ENCODE measurements at regions of chr1 and their contacts with region 1.

Region 1: DNA sequence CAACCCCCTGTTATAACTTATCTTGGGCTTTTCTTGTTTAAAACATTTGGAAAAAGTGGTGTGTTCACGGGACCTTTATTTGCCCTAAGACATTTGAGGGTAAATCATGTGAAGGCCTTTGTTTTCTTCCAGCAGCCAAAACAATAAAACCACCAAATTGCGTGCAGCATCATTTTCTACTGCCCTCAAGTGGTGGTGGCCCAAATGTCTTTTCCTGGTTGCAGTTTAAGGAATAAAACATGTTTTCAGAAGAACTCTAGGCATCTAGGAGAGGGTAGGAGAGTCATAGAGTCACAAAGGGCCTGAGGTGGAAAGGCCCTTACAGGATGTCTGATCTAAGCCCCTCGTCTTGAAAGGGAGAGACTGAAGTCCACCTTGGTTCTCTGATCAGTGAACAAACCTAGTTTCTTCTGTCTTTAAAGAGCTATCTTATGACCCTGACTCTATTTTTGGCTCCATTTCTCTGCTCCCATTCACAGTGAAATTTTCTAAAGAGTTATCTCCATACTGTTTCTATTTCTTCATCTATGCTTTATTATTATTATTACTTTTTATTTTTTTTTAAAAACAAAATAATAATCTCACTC is 16.0 kb upstream of the EPS15 start:
- DNase-seq: no peak
- H3K4me3 ChIP-seq: no peak overlapping the region
- CTCF ChIP-seq: peak; percentile 70

Region 2: DNA sequence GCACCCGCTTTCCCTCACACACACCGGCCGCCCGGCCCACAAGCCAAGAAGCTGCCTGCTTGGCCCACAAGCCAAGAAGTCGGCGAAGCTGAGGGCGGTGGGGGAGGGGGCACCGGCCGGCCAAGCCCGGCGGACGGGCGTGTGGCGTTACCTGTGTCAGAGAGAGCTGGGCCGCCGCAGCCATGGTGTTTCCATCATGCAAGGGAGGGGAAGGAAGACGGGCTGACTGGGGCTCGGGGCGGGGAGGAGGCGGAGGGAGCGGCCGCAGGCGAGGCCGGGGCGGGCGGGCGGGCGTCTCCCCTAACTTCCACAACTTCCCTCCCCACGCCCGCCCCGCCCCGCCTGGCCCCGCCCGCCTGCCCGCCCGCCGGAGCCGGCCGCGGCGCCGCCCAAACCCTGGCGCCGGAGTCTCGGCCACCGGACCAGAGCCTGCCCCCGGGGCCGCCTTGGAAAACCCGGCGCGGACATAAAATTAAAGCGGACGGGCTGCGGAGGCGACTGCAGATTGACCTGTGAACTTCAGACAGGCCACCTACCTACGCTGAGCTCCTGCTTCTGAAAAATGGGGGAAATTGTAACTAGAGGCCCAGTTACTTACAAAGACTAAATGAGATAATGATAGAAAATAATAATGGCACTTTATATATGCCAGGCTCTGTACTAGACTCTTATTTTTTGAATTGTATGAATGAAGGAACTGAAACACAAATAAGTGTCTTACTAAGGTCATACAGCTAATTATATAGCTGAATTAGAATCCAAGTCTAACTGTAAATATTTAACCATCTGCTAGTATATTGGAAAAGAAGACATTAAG is 15.8 kb before region 1 on chr1 and contains the start of gene EPS15:
- CTCF ChIA-PET with region 1: interaction called, 68 read pairs
- POLR2A ChIA-PET with region 1: no interaction called
- DNase-seq: no peak
- H3K4me3 ChIP-seq: peak within 1 kb of the TSS; percentile 79
- CTCF ChIP-seq: no peak

Region 3: DNA sequence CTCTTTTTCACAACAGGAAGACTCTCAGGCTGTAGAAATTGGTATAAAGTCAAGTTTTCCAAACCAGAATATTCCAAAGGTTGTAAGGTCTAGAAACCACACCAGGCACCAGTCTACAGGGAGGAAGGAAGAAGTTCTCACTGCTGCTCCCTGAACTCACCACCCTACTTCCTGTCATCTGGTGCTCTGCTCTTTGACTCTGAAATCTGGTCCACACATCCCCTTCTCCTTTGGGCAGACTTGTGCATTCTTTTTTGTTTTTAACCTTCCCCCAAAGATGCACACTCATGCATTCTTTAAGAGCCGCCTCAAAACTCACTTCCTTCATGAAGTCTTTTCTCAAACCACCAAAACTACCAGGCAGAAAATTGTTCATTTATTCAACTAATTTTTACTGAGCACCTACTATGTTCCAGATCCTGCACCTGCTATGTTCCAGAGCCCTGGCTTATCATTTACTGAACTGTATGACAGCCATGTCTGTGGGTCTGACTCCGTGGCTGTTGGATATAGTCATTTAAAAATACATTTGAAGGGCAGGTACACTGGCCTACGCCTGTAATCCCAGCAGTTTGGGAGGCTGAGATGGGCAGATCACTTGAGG is 14.0 kb after region 1 on chr1:
- CTCF ChIA-PET with region 1: interaction called, 33 read pairs
- POLR2A ChIA-PET with region 1: no interaction called
- DNase-seq: no peak
- H3K4me3 ChIP-seq: no peak overlapping the region
- CTCF ChIP-seq: no peak

Measured in AG04449 (cell line).